HCT116 (cell line): ENCODE measurements at regions of chr7 and their contacts with region 1.

Region 1: GRCh38 chr7:82017334-82017943 is 247.6 kb upstream of the HGF start:
- DNase-seq: peak; percentile 24
- ATAC-seq: peak; percentile 58
- H3K4me3 ChIP-seq: no peak overlapping the region
- H3K27ac ChIP-seq: no peak overlapping the region
- H3K4me1 ChIP-seq: peaks cover 2 to 20% of the 10 kb centered on the region in 2 experiments; a peak in 2 of 4 replicates
- H3K27me3 ChIP-seq: no peaks in the 10 kb centered on the region
- CTCF ChIP-seq: peak; percentile 39 to 69 (median 61); a peak in 5 of 6 replicates
- POLR2A ChIP-seq: no peak
- RAD21 ChIP-seq: peak; percentile 84

Region 2: DNA sequence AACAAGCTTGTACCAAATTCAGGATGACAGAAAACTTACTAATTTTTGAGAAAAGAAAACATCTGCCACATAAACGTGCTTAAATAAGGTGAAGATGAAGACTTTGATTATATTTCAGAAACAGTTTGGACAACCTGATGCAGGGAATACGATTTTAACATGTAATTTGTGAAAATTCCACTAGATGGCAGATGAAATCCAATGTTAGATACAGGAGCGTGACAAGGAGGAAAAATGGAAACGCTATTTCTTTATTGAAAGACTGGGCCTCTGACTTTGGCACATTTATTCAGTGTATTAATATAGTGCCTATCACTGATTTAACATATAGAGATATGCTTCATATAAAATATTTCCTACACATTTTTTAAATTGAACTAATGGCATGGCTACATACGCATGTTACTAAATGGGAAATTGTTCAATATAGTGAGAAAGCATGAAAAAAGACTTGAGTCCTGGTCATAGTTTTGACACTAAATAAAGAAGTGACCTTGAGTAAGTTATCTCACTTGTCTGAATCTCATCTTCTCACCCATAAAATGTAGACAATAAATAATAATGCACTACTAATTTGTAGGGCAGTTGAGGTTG is 1318.3 kb before region 1 on chr7:
- CTCF ChIA-PET with region 1: no interaction called
- POLR2A ChIA-PET with region 1: no interaction called
- RAD21 ChIA-PET with region 1: no interaction called
- intact Hi-C with region 1: loop called (anchors 10 kb)
- DNase-seq: peak; percentile 58
- ATAC-seq: peak; percentile 80
- H3K4me3 ChIP-seq: no peak overlapping the region
- H3K27ac ChIP-seq: no peak overlapping the region
- H3K4me1 ChIP-seq: peaks cover 0 to 8% of the 10 kb centered on the region in 2 experiments; a peak in 3 of 4 replicates
- H3K27me3 ChIP-seq: no peaks in the 10 kb centered on the region
- CTCF ChIP-seq: peak; percentile 30 to 79 (median 70); a peak in 5 of 6 replicates
- POLR2A ChIP-seq: no peak
- RAD21 ChIP-seq: peak; percentile 92

Region 3: DNA sequence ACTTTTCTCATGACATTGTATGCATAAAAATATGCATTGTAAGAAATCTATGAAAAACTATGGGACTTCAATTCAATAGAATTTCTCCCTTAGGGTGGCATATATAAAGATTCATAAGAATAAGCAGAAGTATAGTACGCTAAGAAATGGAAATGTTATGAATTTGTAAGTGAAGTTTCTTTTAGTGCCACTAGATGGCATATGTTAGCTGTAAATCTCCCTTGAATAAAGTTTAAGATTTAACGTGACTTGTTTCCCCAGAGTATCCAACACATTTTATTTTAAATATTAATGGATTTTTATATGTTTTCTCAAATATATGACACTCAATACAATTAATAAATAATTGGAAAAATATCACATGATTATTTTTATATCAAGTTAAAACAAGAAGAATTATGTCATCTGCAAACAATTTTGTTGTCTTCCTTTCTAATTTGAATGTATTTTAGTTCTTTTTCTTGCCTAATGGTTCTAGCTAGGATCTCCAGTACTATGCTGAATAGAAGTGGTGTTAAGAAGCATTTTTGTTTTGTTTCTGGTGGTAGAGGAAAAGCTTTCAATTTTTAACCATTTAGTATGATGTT is 534.7 kb before region 1 on chr7:
- CTCF ChIA-PET with region 1: interaction called, 7 read pairs
- POLR2A ChIA-PET with region 1: no interaction called
- RAD21 ChIA-PET with region 1: no interaction called
- intact Hi-C with region 1: loop called (anchors 5 kb)
- DNase-seq: peak; percentile 23
- ATAC-seq: 0 out of 2 replicates have a peak, but pooled peaks have one; percentile 38
- H3K4me3 ChIP-seq: no peak overlapping the region
- H3K27ac ChIP-seq: no peak overlapping the region
- H3K4me1 ChIP-seq: no peaks in the 10 kb centered on the region
- H3K27me3 ChIP-seq: no peaks in the 10 kb centered on the region
- CTCF ChIP-seq: peak; percentile 31 to 54 (median 39); a peak in 4 of 6 replicates
- POLR2A ChIP-seq: no peak
- RAD21 ChIP-seq: peak; percentile 67

Region 4: DNA sequence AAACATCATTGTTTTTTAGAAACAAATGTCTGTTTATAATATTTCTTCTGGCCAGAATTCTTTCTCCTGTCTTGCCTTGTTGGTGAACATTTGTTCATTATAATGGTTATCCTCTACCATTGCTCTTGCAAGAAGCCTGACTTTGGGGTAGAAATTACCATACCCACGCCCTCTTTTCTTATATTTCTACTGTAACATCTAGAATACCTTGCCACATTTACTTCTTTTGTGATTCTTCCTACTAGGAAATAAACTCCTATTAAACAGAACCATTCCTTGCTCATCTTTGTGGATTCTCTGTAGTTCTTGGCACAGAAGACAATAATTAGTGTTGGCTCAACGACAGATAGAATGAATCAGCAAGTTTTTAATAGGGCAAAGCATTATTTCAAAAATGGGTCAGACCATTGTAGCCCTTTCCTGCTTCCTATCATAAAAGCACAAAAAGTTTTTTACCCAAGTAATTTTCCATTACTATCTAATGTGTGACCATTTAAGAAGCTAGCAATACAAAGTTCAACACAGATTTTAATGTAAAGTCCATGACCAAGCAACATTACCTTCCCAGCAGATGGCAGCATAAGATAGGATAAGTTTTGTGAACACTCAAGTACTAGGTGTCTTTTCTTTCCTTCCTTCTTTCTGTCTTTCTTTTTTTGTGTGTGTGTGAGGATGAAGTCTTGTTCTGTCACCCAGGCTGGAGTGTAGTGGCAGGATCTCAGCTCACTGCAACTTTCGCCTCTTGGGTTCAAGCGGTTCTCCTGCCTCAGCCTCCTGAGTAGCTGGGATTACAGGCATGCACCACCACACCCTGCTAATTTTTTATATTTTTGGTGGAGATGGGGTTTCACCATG is 518.0 kb before region 1 on chr7:
- CTCF ChIA-PET with region 1: interaction called, 89 read pairs
- POLR2A ChIA-PET with region 1: no interaction called
- RAD21 ChIA-PET with region 1: interaction called, 6 to 13 read pairs
- intact Hi-C with region 1: loop called (anchors 1 kb)
- DNase-seq: peak; percentile 81
- ATAC-seq: peak; percentile 83
- H3K4me3 ChIP-seq: no peak overlapping the region
- H3K27ac ChIP-seq: no peak overlapping the region
- H3K4me1 ChIP-seq: peaks cover 0 to 5% of the 10 kb centered on the region in 2 experiments; a peak in 1 of 4 replicates
- H3K27me3 ChIP-seq: no peaks in the 10 kb centered on the region
- CTCF ChIP-seq: peak; percentile 36 to 62 (median 60); a peak in 4 of 6 replicates
- POLR2A ChIP-seq: no peak
- RAD21 ChIP-seq: peak; percentile 85

Region 5: GRCh38 chr7:81715984-81716588 is 301.4 kb before region 1 on chr7:
- CTCF ChIA-PET with region 1: no interaction called
- POLR2A ChIA-PET with region 1: no interaction called
- RAD21 ChIA-PET with region 1: no interaction called
- intact Hi-C with region 1: loop called (anchors 1 kb)
- DNase-seq: peak; percentile 60
- ATAC-seq: peak; percentile 93
- H3K4me3 ChIP-seq: no peak overlapping the region
- H3K27ac ChIP-seq: no peak overlapping the region
- H3K4me1 ChIP-seq: no peaks in the 10 kb centered on the region
- H3K27me3 ChIP-seq: no peaks in the 10 kb centered on the region
- CTCF ChIP-seq: peak; percentile 48 to 80 (median 67); a peak in 4 of 6 replicates
- POLR2A ChIP-seq: no peak
- RAD21 ChIP-seq: peak; percentile 84

Region 6: DNA sequence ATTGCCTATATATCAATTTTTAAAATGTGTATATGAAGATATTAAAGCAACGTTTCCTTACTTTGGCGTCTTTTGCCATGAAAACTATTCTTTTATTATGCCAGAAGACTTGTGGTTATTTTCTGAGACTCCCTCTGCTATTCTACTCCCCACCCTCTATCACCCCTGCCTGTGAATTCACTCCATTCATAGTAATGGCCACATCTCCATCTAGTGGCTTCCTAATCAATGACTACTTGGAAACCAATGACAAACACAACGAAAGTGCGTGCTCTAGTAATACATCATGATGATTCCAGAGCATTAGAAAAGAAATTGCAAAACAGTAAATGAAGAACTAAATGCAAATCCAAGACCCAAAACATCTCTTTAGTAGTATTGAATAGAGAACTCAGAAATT is 60.9 kb before region 1 on chr7:
- CTCF ChIA-PET with region 1: interaction called, 4 read pairs
- POLR2A ChIA-PET with region 1: no interaction called
- RAD21 ChIA-PET with region 1: no interaction called
- intact Hi-C with region 1: loop called (anchors 2 kb)
- DNase-seq: peak; percentile 47
- ATAC-seq: peak; percentile 96
- H3K4me3 ChIP-seq: no peak overlapping the region
- H3K27ac ChIP-seq: no peak overlapping the region
- H3K4me1 ChIP-seq: no peaks in the 10 kb centered on the region
- H3K27me3 ChIP-seq: no peaks in the 10 kb centered on the region
- CTCF ChIP-seq: peak; percentile 61 to 75 (median 70)
- POLR2A ChIP-seq: no peak
- RAD21 ChIP-seq: peak; percentile 80